ENCODE measurements at regions of chr4 and their contacts with region 1.

Region 1: DNA sequence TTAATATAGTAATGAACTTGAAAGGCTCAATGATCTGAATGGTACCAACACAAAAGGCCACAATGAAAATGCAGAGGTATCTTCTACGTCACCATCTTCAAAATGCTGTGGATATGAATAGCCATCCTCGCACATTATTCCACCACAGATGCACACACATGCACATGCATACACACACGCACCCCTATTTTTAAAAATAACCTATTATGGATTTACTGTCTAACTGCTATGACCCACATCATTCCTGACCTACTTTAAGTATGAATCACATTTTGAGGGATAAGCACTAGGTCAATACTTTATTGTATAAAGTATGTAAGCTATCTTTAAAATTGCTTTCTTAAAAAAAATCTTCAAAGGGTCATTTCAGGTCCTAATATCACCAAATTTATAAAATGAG is 24.4 kb upstream of the CORIN start:
- DNase-seq: no peak
- ATAC-seq: no peak
- H3K4me3 Mint-ChIP-seq: no peak overlapping the region
- H3K27ac Mint-ChIP-seq: no peak overlapping the region
- H3K4me1 Mint-ChIP-seq: no peaks in the 10 kb centered on the region
- H3K27me3 Mint-ChIP-seq: no peaks in the 10 kb centered on the region

Region 2: DNA sequence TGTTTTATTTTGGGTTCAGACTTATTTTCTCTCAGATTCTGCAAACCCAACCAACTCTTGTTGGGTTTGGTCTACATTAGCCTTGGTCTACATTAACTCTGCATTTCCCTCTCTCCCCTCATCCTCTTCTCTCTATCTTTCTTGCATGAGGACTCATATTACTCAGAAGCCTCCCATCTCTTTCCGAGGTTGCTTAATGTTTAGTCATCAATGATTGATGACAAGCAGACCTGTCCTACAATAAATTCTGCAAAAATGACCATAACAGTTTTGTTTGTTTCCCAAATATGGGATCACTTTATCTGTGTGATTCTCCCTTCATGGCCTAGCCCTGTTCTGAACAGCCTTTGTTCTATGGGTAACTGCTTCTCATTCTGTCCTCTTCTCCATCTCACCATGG is 755.7 kb before region 1 on chr4:
- CTCF ChIA-PET with region 1: no interaction called
- POLR2A ChIA-PET with region 1: no interaction called
- intact Hi-C with region 1: no loop called
- DNase-seq: no peak
- ATAC-seq: no peak
- H3K4me3 Mint-ChIP-seq: no peak overlapping the region
- H3K27ac Mint-ChIP-seq: no peak overlapping the region
- H3K4me1 Mint-ChIP-seq: no peaks in the 10 kb centered on the region
- H3K27me3 Mint-ChIP-seq: peaks cover 13% of the 10 kb centered on the region

Region 3: DNA sequence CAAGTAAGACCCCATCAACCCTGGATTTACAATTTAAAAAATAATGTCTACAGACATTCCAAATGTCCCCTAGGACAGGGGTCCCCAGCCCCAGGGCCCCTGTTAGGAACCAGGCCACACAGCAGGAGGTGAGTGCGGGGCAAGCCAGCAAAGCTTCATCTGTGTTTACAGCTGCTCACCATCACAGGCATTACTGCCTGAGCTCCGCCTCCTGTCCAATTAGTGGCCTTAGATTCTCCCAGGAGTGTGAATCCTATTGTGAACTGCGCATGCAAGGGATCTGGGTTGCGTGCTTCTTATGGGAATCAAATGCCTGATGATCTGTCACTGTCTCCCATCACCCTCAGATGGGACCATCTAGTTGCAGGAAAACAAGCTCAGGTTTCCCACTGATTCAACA is 231.1 kb before region 1 on chr4:
- CTCF ChIA-PET with region 1: no interaction called
- POLR2A ChIA-PET with region 1: no interaction called
- intact Hi-C with region 1: no loop called
- DNase-seq: no peak
- ATAC-seq: no peak
- H3K4me3 Mint-ChIP-seq: no peak overlapping the region
- H3K27ac Mint-ChIP-seq: no peak overlapping the region
- H3K4me1 Mint-ChIP-seq: no peaks in the 10 kb centered on the region
- H3K27me3 Mint-ChIP-seq: peaks cover 12% of the 10 kb centered on the region

Region 4: DNA sequence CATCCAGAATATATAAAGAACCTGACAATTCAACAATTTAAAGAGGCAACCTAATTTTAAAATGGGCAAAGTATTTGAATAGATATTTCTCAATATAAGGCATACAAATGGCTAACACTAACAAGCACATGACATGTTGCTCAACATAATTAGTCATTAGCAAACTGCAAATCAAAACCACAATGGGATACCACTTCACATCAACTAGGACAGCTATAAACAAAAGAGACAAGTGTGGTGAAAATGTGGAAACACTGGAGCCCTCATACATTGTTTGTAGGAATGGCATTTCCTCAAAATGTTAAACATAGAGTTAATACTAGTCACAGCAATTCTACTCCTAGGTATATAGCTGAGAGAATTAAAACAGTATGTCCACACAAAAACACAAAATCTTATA is 121.1 kb before region 1 on chr4:
- CTCF ChIA-PET with region 1: no interaction called
- POLR2A ChIA-PET with region 1: no interaction called
- intact Hi-C with region 1: no loop called
- DNase-seq: no peak
- ATAC-seq: no peak
- H3K4me3 Mint-ChIP-seq: no peak overlapping the region
- H3K27ac Mint-ChIP-seq: no peak overlapping the region
- H3K4me1 Mint-ChIP-seq: peaks cover 5% of the 10 kb centered on the region
- H3K27me3 Mint-ChIP-seq: peaks cover 6% of the 10 kb centered on the region

Region 5: GRCh38 chr4:47891928-47892327 is 29.6 kb after region 1 on chr4:
- CTCF ChIA-PET with region 1: no interaction called
- POLR2A ChIA-PET with region 1: no interaction called
- intact Hi-C with region 1: loop called in 1 of 2 experiments (anchors 1 kb)
- DNase-seq: no peak
- ATAC-seq: peak; percentile 78
- H3K4me3 Mint-ChIP-seq: no peak overlapping the region
- H3K27ac Mint-ChIP-seq: no peak overlapping the region
- H3K4me1 Mint-ChIP-seq: peaks cover 12% of the 10 kb centered on the region
- H3K27me3 Mint-ChIP-seq: no peaks in the 10 kb centered on the region

Measured in activated CD4-positive, alpha-beta T cell treated with anti-CD3 and anti-CD28 coated beads for 36 hours (primary cell).